GM10248 (cell line): ENCODE measurements at regions of chr7 and their contacts with region 1.

Region 1: GRCh38 chr7:94087664-94088352 is 83.7 kb upstream of the BET1 start:
- DNase-seq: peak; percentile 76
- CTCF ChIP-seq: peak; percentile 84

Region 2: GRCh38 chr7:94069162-94069739 is 18.6 kb before region 1 on chr7:
- CTCF ChIA-PET with region 1: interaction called, 11 read pairs
- POLR2A ChIA-PET with region 1: no interaction called
- DNase-seq: peak; percentile 29
- CTCF ChIP-seq: no peak

Region 3: DNA sequence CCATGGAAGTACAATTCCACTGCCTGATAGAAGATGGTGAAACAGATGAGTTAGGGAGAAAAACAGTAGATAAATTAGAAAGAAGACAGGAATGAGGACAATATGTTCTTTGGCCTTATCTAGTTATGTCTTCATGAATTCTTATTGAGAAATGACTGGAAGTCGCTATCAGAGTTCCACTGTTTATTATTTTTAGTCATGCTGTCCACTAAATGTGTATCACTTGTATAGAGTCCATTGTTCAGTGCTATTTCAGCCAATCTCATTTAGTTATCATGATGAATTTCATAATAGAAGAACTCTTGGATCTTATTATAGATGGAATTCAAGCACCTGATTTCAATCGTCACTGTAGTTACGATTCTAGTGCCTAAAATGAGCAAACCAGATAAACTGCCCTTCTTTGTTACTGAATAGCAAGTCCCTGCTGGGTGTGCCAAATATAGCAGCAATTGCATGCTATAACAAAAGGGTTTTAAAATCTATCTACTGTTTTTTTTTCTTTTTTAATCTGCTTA is 129.2 kb after region 1 on chr7:
- CTCF ChIA-PET with region 1: no interaction called
- POLR2A ChIA-PET with region 1: no interaction called
- DNase-seq: no peak
- CTCF ChIP-seq: no peak

Region 4: GRCh38 chr7:94431619-94432280 is 343.9 kb after region 1 on chr7:
- CTCF ChIA-PET with region 1: no interaction called
- POLR2A ChIA-PET with region 1: no interaction called
- DNase-seq: no peak
- CTCF ChIP-seq: no peak